Activated CD4-positive, alpha-beta memory T cell treated with anti-CD3 and anti-CD28 coated beads for 36 hours (primary cell): ENCODE measurements at regions of chr2 and their contacts with region 1.

Region 1: DNA sequence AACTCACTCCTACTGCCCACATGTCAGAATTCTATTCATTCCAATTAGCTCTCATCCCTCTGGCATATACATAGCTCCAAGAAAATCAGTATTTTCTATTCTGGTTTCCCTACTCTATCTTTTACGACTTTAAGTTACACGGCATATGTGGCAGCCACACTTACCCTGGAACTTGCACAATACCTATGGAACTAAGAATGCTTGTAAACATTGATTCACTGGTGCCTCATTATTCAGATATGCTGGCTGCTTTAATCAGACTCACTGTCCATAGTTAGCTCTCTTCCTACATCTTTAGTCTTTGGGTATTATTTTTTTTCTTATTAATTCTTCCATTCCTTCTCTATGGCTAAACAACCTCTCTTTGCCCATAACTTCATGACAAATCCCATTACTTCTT is 1519.9 kb upstream of the ACVR2A start:
- DNase-seq: no peak
- H3K4me3 Mint-ChIP-seq: no peak overlapping the region
- H3K27ac Mint-ChIP-seq: no peak overlapping the region
- H3K4me1 Mint-ChIP-seq: no peaks in the 10 kb centered on the region
- H3K27me3 Mint-ChIP-seq: no peaks in the 10 kb centered on the region

Region 2: GRCh38 chr2:146351689-146352088 is 26.7 kb after region 1 on chr2:
- CTCF ChIA-PET with region 1: no interaction called
- POLR2A ChIA-PET with region 1: no interaction called
- intact Hi-C with region 1: loop called (anchors 1 kb)
- DNase-seq: no peak
- H3K4me3 Mint-ChIP-seq: no peak overlapping the region
- H3K27ac Mint-ChIP-seq: no peak overlapping the region
- H3K4me1 Mint-ChIP-seq: no peaks in the 10 kb centered on the region
- H3K27me3 Mint-ChIP-seq: no peaks in the 10 kb centered on the region